ENCODE measurements at regions of chr1 and their contacts with region 1.

Region 1: GRCh38 chr1:62753031-62753965 is 30.6 kb upstream of the ATG4C start:
- DNase-seq: no peak
- ATAC-seq: no peak
- H3K4me3 ChIP-seq: no peak overlapping the region
- H3K27ac ChIP-seq: no peak overlapping the region
- H3K4me1 ChIP-seq: no peaks in the 10 kb centered on the region
- CTCF ChIP-seq: no peak
- EP300 ChIP-seq: no peak
- POLR2A ChIP-seq: no peak
- RAD21 ChIP-seq: no peak

Region 2: DNA sequence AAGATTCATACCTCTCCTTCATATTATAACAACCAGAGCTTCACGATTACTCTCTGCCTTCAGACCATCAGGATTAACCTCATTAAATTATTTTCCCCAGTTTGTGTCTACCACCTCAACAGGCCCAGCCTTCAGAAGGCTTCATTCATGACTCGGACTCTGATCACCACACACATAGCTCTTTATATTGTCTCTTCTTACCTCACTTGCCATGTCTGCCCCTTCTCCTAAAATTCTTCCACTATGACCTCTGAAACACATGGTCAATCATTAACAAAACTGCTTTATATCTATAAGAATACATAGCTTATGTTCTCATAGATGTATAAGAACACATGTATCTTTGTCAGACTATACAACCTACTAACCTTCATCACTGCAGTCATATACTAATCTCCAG is 236.7 kb before region 1 on chr1:
- CTCF ChIA-PET with region 1: no interaction called
- POLR2A ChIA-PET with region 1: no interaction called
- DNase-seq: no peak
- ATAC-seq: no peak
- H3K4me3 ChIP-seq: no peak overlapping the region
- H3K27ac ChIP-seq: no peak overlapping the region
- H3K4me1 ChIP-seq: peaks cover 8% of the 10 kb centered on the region; the same call in 2 of the 3 replicates
- CTCF ChIP-seq: no peak
- EP300 ChIP-seq: no peak
- POLR2A ChIP-seq: no peak
- RAD21 ChIP-seq: no peak

Region 3: DNA sequence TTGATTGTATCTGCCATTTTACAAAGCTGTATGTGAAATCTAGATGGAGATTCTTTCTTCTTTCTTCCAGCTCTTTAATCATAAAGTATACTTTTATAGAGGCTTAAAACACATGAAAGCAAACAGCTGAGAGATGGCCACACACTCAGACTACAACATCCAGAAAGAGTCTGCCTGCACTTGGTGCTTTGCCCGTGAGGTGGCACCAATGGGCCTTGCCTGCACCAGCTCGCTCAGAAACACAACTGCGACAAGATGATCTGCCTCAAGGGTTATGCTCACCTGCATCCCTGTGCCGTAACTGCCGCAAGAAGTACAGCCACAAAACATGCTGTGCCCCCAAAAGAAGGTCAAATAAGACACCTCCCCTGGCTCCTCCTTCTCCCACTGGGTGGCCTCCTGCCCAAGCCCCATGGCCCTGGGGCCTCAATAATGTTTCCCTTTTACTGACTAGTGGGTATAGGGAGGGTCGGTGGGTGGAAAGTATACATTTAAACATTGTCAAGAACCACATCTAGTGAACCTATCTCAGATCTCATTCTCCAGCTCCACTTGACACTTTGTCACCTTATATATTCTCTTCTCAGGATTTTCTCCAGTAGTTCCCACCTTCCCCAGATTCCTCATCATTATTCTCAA is 222.7 kb before region 1 on chr1:
- CTCF ChIA-PET with region 1: interaction called, 67 read pairs
- POLR2A ChIA-PET with region 1: no interaction called
- DNase-seq: peak; percentile 10 to 67
- ATAC-seq: peak; percentile 94 to 96
- H3K4me3 ChIP-seq: no peak overlapping the region
- H3K27ac ChIP-seq: no peak overlapping the region
- H3K4me1 ChIP-seq: no peaks in the 10 kb centered on the region
- CTCF ChIP-seq: peak; percentile 66
- EP300 ChIP-seq: no peak
- POLR2A ChIP-seq: no peak
- RAD21 ChIP-seq: peak; percentile 80 to 85

Region 4: DNA sequence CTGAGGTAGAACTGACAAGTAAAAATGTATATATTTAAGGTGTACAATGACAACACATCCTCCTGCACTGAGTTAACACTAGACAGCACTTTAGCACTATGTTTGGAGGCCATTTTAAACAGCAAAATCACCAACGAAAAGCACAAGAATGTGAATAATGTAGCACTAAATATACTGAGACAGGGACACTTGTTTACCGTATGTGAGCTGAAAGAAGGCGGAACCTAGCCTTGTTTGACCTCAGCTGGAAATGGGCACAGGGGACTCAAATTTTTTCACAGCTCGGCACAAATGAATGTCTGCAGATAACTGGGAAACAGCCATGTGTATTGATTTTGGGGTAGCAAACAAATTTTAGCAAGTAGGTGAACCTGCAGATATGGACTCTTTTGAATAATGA is 12.7 kb after region 1 on chr1:
- CTCF ChIA-PET with region 1: no interaction called
- POLR2A ChIA-PET with region 1: no interaction called
- DNase-seq: no peak
- ATAC-seq: no peak
- H3K4me3 ChIP-seq: no peak overlapping the region
- H3K27ac ChIP-seq: no peak overlapping the region
- H3K4me1 ChIP-seq: no peaks in the 10 kb centered on the region
- CTCF ChIP-seq: no peak
- EP300 ChIP-seq: no peak
- POLR2A ChIP-seq: no peak
- RAD21 ChIP-seq: no peak

Measured in A549 (cell line).